ENCODE measurements at regions of chr15 and their contacts with region 1.

Region 1: DNA sequence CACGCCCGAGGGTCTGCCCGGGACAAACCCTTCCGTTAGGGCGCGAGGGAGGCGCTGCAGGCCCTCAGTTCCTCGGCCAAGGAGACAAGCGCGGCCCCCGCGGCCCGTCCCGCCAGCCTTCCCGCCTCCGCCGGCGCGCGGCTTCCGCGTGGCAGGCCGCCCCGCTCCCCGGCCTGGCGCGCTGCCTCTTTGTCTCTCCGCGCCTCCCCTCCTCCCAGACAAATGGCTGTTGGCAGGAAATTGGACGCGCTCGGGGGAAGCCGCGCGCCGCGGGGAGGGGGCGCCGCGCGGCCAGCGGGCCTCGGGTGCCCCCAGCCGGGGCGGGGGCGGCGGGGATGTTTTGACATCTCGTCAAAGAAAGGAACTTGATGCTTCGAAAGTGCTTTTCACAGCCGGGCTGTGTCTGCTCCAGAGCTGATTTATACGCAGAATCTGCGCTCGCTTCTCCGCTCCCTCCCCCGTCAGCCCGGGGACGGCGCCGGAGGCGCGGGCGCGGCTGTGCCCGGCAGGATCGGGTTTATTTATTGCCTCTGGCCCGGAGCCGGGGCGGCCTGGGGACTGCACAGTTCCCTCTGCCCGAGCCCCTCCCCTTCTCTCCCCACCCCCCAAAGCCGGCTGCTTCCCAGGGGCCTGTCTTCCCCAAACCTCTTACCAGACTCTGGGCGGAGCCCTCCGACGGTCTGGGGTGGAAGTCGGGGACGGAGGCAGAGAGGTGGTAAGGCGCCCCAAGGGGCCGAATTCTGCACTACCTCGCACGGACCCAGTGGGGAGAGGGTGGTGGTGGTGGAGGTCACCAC is 20.7 kb downstream of the SHF start:
- DNase-seq: peak; percentile 84 to 90
- H3K4me3 ChIP-seq: peak overlapping the region; percentile 57 to 78 (median 60)
- H3K27ac ChIP-seq: peak overlapping the region; percentile 85
- H3K4me1 ChIP-seq: peaks cover 0 to 19% (median 15%) of the 10 kb centered on the region in 4 experiments; a peak in 5 of 7 replicates
- H3K27me3 ChIP-seq: no peaks in the 10 kb centered on the region
- CTCF ChIP-seq: peak; percentile 67 to 75 (median 74)
- EP300 ChIP-seq: peak in 1 of 2 experiments; percentile 16; a peak in 1 of 3 replicates
- POLR2A ChIP-seq: peak; percentile 46 to 75
- RAD21 ChIP-seq: peak; percentile 32 to 42

Region 2: GRCh38 chr15:45118131-45118588 is 48.9 kb before region 1 on chr15:
- CTCF ChIA-PET with region 1: interaction called, 24 read pairs
- POLR2A ChIA-PET with region 1: interaction called, 3 read pairs
- DNase-seq: peak; percentile 61 to 93
- H3K4me3 ChIP-seq: peak overlapping the region in 2 of 4 experiments; percentile 38 to 54; a peak in 4 of 8 replicates
- H3K27ac ChIP-seq: no peak overlapping the region
- H3K4me1 ChIP-seq: peaks cover 0 to 17% (median 14%) of the 10 kb centered on the region in 4 experiments; a peak in 6 of 7 replicates
- H3K27me3 ChIP-seq: peaks cover 48 to 61% (median 54%) of the 10 kb centered on the region in 4 experiments
- CTCF ChIP-seq: peak; percentile 99 to 100 (median 100)
- EP300 ChIP-seq: no peak
- POLR2A ChIP-seq: no peak
- RAD21 ChIP-seq: peak; percentile 65 to 77

Region 3: DNA sequence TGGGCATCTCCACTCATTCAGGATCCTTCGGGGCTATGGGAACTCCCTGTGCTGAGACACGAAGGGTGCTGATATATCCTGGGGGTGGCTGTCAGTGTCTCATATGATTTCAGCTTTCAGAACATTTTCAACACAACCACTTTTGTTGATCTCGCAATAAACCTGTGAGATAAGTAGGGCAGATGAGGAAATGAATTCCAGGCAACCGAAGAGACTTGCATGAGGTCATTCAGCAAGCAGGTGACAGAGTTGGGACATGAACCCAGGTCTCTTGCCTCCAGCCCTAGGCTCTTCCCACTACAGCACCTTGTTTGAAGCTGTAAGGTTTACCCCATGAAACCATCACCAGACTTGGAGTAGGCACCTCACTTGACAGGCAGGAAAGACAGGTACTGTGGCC is 20.6 kb before region 1 on chr15:
- CTCF ChIA-PET with region 1: interaction called, 28 read pairs
- POLR2A ChIA-PET with region 1: interaction called, 3 read pairs
- DNase-seq: no peak
- H3K4me3 ChIP-seq: no peak overlapping the region
- H3K27ac ChIP-seq: no peak overlapping the region
- H3K4me1 ChIP-seq: no peaks in the 10 kb centered on the region; a peak in 1 of 7 replicates
- H3K27me3 ChIP-seq: no peaks in the 10 kb centered on the region; a peak in 1 of 7 replicates
- CTCF ChIP-seq: no peak
- EP300 ChIP-seq: no peak
- POLR2A ChIP-seq: no peak
- RAD21 ChIP-seq: no peak

Region 4: GRCh38 chr15:45198337-45199135 is 31.5 kb after region 1 on chr15:
- CTCF ChIA-PET with region 1: interaction called, 1,117 read pairs
- POLR2A ChIA-PET with region 1: interaction called, 27 read pairs
- DNase-seq: peak in 1 of 2 experiments; percentile 96
- H3K4me3 ChIP-seq: peak overlapping the region; percentile 66 to 100 (median 96)
- H3K27ac ChIP-seq: peak overlapping the region; percentile 50; the same call in 1 of the 2 replicates
- H3K4me1 ChIP-seq: no peaks in the 10 kb centered on the region
- H3K27me3 ChIP-seq: no peaks in the 10 kb centered on the region; a peak in 1 of 7 replicates
- CTCF ChIP-seq: peak; percentile 61 to 84 (median 80)
- EP300 ChIP-seq: no peak
- POLR2A ChIP-seq: peak in 1 of 2 experiments; percentile 41; a peak in 1 of 3 replicates
- RAD21 ChIP-seq: peak; percentile 18 to 32; a peak in 3 of 4 replicates

Region 5: GRCh38 chr15:45291822-45292582 is 125.0 kb after region 1 on chr15:
- CTCF ChIA-PET with region 1: no interaction called
- POLR2A ChIA-PET with region 1: no interaction called
- DNase-seq: no peak
- H3K4me3 ChIP-seq: no peak overlapping the region
- H3K27ac ChIP-seq: no peak overlapping the region
- H3K4me1 ChIP-seq: no peaks in the 10 kb centered on the region
- H3K27me3 ChIP-seq: no peaks in the 10 kb centered on the region
- CTCF ChIP-seq: no peak
- EP300 ChIP-seq: no peak
- POLR2A ChIP-seq: no peak
- RAD21 ChIP-seq: no peak

Region 6: DNA sequence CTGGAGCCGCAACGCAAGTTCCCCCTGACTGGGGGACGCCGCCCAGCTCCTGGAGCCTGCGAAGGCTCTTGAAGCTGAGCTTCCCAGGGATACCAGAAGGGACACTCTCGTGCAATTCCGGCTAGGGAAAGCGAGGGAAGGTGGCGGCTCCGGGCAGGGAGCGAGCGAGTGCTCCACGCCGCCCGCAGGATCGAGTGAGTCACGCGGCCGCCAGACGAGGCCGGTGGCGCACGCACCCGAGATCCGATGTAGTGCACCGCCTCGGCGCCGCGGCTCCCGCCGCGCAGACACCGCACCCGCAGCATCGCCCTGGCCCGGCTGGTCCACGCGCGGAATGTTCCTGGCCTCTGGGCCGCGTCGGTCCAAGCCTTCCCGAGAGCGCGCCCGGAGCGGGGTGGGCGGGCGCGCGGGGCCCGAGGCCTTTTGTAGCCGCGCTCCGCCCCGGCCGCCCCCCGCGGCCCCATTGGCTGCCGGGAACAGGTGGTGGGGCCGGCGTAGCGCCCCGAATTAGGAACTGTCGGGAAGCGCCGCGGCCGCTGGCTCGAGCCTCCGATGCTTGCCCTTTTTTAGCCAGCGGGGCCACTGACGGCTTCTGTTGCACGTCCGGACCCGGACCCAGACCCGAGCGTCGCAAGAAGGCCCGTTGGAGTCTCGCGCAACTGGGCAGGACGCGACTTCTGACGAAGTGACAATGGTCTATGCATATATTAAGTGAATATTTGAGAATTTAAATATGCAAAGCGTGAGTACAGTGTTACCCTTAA is 211.3 kb after region 1 on chr15 and contains the start of gene GATM:
- CTCF ChIA-PET with region 1: interaction called, 11 read pairs
- POLR2A ChIA-PET with region 1: no interaction called
- DNase-seq: peak in 1 of 2 experiments; percentile 77
- H3K4me3 ChIP-seq: peak within 1 kb of the TSS; percentile 48 to 73 (median 64)
- H3K27ac ChIP-seq: no peak within 1 kb of the TSS
- H3K4me1 ChIP-seq: peaks cover 0 to 2% (median 0%) of the 10 kb centered on the region in 4 experiments; a peak in 2 of 7 replicates
- H3K27me3 ChIP-seq: peaks cover 10 to 40% (median 34%) of the 10 kb centered on the region in 4 experiments
- CTCF ChIP-seq: peak; percentile 42 to 56 (median 45); a peak in 3 of 4 replicates
- EP300 ChIP-seq: no peak
- POLR2A ChIP-seq: peak in 1 of 2 experiments; percentile 64; a peak in 2 of 3 replicates
- RAD21 ChIP-seq: peak in 1 of 2 experiments; percentile 30; a peak in 2 of 4 replicates
- total RNA-seq, gene GATM: 10.0 and 10.2 TPM in 2 replicates

Region 7: GRCh38 chr15:45457641-45458433 is 290.8 kb after region 1 on chr15:
- CTCF ChIA-PET with region 1: interaction called, 16 read pairs
- POLR2A ChIA-PET with region 1: no interaction called
- DNase-seq: peak in 1 of 2 experiments; percentile 84
- H3K4me3 ChIP-seq: peak overlapping the region in 1 of 4 experiments; percentile 41; a peak in 3 of 8 replicates
- H3K27ac ChIP-seq: no peak overlapping the region
- H3K4me1 ChIP-seq: no peaks in the 10 kb centered on the region
- H3K27me3 ChIP-seq: peaks cover 7 to 15% (median 10%) of the 10 kb centered on the region in 4 experiments
- CTCF ChIP-seq: peak; percentile 21 to 91 (median 61)
- EP300 ChIP-seq: no peak
- POLR2A ChIP-seq: no peak
- RAD21 ChIP-seq: peak; percentile 93